Activated naive CD8-positive, alpha-beta T cell treated with anti-CD3 and anti-CD28 coated beads, Interleukin-2, amount 10 ng/mL, durations not matched to agents 7 days and 5 days (primary cell): ENCODE measurements at regions of chr16 and their contacts with region 1.

Region 1: DNA sequence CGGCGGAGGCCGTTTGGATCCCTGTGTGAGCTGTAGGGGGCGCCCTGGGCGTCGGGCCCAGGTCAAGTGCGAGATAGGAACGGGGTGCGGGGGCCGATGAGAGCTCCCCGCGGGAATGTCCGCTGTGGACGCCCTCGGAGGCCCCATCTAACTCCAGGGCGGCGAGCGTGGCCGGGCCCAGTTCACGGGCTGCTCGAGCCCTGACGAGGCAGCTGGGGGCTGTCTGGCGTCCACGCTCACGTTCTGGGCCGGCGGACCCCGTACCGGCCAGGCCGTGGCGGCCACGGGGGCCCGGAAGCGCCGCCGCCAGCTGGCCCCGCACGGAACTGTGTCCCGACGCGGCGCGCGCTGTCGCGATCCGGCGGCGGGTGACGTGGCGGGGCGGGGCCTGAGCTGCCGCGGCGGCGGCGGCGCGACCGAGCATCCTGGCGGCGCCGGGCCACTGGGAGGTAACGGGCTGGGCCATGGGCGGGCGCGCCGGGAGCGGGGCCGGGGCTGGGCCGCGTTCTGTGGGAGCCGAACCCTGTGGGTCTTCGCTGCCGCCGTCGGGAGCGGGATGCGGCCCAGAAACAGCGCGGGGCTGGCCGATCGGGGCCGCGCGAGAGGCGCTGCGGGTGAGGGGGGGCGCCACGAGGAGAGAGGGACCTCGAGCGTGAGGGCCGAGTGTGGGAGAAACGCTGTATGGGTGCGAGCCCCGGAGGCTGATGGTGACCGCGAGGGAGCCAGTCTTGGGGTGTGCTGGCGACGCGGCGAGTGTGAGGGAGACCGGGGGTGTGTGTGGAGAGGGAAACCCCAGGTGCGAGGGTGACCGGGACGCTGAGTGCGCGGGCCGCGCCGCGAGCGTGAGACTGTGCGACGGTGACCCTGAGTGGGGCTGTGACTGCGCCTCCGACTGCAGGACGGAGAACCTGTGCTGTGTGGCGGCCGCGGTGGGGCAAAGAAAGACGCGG is at the start of gene SLC7A6:
- DNase-seq: peak; percentile 92
- ATAC-seq: peak; percentile 71
- H3K4me3 Mint-ChIP-seq: peak within 1 kb of the TSS; percentile 97
- H3K27ac Mint-ChIP-seq: peak within 1 kb of the TSS; percentile 98
- H3K4me1 Mint-ChIP-seq: peaks cover 45% of the 10 kb centered on the region
- H3K27me3 Mint-ChIP-seq: no peaks in the 10 kb centered on the region
- total RNA-seq, gene SLC7A6: 110 to 113 TPM

Region 2: GRCh38 chr16:68275611-68276191 is 11.3 kb after region 1 on chr16:
- POLR2A ChIA-PET with region 1: interaction called, 18 read pairs
- DNase-seq: no peak
- ATAC-seq: peak; percentile 74
- H3K4me3 Mint-ChIP-seq: peak overlapping the region; percentile 67
- H3K27ac Mint-ChIP-seq: peak overlapping the region; percentile 86
- H3K4me1 Mint-ChIP-seq: peaks cover 50% of the 10 kb centered on the region
- H3K27me3 Mint-ChIP-seq: no peaks in the 10 kb centered on the region

Region 3: DNA sequence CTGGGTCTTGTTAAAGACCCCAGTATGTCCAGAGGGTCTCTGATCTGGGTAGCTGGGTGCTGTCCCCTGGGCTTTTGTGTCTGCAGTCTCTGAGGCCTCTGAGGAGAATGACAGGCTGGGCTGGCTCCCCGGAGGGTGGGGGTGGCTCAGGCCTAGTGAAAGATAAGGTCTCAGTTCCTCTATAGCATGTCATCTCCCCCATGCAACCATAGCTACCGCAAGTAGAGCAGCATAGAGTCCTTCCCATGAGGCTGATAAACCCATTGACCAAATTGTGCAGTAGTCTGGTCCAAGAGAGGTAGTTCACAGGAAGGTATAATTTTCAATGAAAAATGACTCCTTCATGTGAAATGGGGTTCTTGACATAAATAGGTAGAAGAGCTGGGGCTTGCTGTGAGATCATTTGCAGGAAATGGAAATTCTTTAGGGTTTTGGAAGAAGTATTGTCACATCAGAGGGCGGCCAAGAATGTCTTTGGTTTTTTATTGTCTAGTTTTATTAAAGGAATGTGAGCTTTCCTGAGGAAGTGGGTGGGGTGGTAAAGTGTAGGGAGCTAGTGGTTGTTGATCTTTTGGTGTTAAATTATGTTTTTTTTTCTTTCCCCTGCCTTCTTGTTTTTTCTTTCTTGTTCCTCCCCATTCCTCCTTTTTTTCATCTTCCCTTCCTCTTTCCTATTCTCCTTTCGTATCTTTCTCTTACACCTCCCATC is 25.4 kb after region 1 on chr16:
- POLR2A ChIA-PET with region 1: interaction called, 297 read pairs
- DNase-seq: peak; percentile 65
- ATAC-seq: peak; percentile 79
- H3K4me3 Mint-ChIP-seq: peak overlapping the region; percentile 39
- H3K27ac Mint-ChIP-seq: peak overlapping the region; percentile 90
- H3K4me1 Mint-ChIP-seq: peaks cover 65% of the 10 kb centered on the region
- H3K27me3 Mint-ChIP-seq: no peaks in the 10 kb centered on the region

Region 4: DNA sequence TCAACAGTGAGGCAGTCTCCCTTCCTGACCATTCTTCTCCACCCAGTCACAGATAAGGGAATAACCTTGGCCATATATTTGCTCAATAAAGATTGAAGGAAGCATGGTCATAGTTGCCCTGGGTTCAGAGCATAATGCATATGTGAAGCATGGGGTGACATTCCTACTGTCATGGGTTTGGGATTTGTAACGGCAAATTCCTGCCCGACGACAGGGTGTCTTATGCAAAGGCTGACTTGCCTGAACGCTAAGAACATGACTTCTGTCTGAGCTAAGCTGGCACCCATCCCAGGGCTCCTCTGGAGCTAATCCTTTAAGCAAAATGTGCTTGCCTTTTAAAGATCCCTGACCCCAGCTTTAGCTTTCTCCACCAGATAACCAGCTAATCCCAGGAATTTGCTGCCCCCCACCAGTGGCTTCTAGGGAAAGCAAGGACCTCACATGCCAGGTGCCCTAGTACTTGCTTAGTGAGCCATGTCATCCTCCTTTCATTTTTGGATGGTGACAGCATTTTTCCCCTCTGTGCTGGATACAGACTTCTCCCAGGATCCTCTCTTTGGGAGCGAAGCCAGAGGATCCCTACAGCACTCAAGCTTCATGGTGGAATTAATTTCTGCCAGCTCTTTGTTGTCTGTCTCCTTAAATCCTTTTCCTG is 34.6 kb after region 1 on chr16:
- POLR2A ChIA-PET with region 1: interaction called, 10 read pairs
- DNase-seq: no peak
- ATAC-seq: no peak
- H3K4me3 Mint-ChIP-seq: no peak overlapping the region
- H3K27ac Mint-ChIP-seq: no peak overlapping the region
- H3K4me1 Mint-ChIP-seq: peaks cover 7% of the 10 kb centered on the region
- H3K27me3 Mint-ChIP-seq: no peaks in the 10 kb centered on the region

Region 5: DNA sequence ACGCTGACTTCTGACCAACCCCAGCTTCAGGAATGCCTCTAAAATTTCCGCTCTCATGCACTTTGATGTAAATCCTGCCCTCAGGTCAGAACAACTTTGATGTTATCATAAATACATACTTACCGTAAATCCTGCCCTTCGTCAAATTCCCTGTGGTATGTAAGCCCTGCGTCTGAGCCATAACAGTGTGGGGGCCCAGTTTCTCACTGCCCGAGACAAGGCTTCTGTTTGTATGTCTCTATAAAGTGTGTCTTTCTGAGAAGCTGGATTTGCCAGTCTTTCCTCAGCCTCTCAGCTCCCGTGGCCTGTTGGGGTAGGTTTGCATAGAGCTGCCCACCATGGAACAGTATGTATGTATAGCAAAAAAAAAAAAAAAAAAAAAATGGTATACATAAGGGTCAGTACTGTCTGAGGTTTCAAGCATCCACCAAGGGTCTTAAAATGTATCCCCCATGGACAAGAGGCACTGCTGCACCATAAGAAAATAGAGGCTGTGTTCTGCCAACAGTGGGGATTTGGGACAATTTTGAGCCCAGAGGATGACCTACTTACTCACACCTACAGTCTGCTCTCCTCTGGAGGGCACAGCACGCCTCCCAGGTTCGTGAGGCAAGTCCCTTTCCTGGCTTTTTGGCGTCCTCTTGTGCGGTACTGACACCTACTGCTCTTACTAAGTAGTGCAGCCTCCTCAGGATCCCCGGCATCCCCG is 63.9 kb after region 1 on chr16:
- POLR2A ChIA-PET with region 1: interaction called, 21 read pairs
- DNase-seq: peak; percentile 72
- ATAC-seq: peak; percentile 81
- H3K4me3 Mint-ChIP-seq: no peak overlapping the region
- H3K27ac Mint-ChIP-seq: no peak overlapping the region
- H3K4me1 Mint-ChIP-seq: peaks cover 28% of the 10 kb centered on the region
- H3K27me3 Mint-ChIP-seq: no peaks in the 10 kb centered on the region